GM12878 (cell line): ENCODE measurements at regions of chr15 and their contacts with region 1.

Region 1: DNA sequence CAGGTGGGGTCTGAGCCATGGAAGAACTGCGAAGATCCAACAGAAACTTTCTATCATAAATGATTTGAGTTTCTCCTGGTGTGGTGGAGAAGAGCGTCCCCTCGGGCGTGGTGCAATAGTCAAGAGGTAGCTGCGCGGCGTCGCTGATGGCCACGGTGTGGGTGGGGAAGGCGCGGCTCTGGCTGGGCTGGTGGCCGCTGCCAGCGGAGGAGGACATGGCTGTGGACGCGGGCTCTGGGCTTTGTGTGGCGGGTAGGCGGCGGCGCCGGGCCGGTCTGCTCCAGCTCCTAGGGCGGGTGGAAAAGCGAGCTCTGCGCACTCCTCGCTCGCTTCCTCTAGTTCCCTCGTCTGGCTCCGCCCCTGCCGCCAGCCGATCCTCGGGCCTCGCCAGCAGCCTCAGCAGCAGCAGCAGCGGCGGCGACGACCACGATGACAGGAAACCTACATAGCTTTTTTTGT is 5.9 kb downstream of the STARD9 start:
- DNase-seq: no peak
- ATAC-seq: peak; percentile 96
- H3K4me3 ChIP-seq: peak overlapping the region; percentile 57
- H3K27ac ChIP-seq: no peak overlapping the region; the same call in 1 of the 2 replicates
- H3K4me1 ChIP-seq: peaks cover 15% of the 10 kb centered on the region
- H3K27me3 ChIP-seq: no peaks in the 10 kb centered on the region
- CTCF ChIP-seq: 0 out of 6 replicates have a peak, but pooled peaks of 1 of the 3 experiments have one; percentile 2
- EP300 ChIP-seq: no peak
- POLR2A ChIP-seq: peak; percentile 78
- RAD21 ChIP-seq: no peak

Region 2: DNA sequence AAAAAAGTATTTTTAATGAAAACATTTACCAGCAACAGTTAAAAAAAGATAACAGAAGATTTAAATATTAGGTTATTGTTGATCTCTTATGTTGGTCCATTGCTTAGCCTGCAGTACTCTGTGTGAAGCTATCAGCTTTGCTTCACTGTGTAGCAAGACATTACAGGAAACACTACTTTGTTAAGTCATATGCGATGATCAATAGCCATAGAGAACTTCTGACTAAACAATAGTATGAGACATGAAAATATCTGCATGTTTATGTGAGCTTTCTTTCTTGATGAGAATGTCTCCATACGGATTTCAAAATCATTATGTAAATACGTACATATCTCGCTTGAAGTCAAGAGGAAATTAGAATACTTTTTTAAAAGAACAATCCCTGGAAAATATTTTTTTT is 249.0 kb before region 1 on chr15:
- CTCF ChIA-PET with region 1: no interaction called
- POLR2A ChIA-PET with region 1: no interaction called
- RAD21 ChIA-PET with region 1: no interaction called
- SMC1A ChIA-PET with region 1: no interaction called
- in situ Hi-C with region 1: no loop called
- intact Hi-C with region 1: no loop called
- DNase-seq: no peak
- ATAC-seq: no peak
- H3K4me3 ChIP-seq: no peak overlapping the region
- H3K27ac ChIP-seq: no peak overlapping the region
- H3K4me1 ChIP-seq: no peaks in the 10 kb centered on the region
- H3K27me3 ChIP-seq: no peaks in the 10 kb centered on the region
- CTCF ChIP-seq: no peak
- EP300 ChIP-seq: no peak
- POLR2A ChIP-seq: no peak
- RAD21 ChIP-seq: no peak

Region 3: GRCh38 chr15:42602501-42602900 is 21.2 kb after region 1 on chr15:
- CTCF ChIA-PET with region 1: interaction called, 4 read pairs
- POLR2A ChIA-PET with region 1: interaction called, 38 read pairs
- RAD21 ChIA-PET with region 1: interaction called, 30 read pairs
- SMC1A ChIA-PET with region 1: interaction called, 53 read pairs
- in situ Hi-C with region 1: no loop called
- intact Hi-C with region 1: no loop called
- DNase-seq: no peak
- ATAC-seq: no peak
- H3K4me3 ChIP-seq: no peak overlapping the region
- H3K27ac ChIP-seq: no peak overlapping the region
- H3K4me1 ChIP-seq: peaks cover 36% of the 10 kb centered on the region
- H3K27me3 ChIP-seq: no peaks in the 10 kb centered on the region
- CTCF ChIP-seq: no peak
- EP300 ChIP-seq: no peak
- POLR2A ChIP-seq: no peak
- RAD21 ChIP-seq: no peak

Region 4: GRCh38 chr15:42632105-42632675 is 50.9 kb after region 1 on chr15:
- CTCF ChIA-PET with region 1: no interaction called
- POLR2A ChIA-PET with region 1: interaction called, 4 read pairs
- RAD21 ChIA-PET with region 1: interaction called, 3 read pairs
- SMC1A ChIA-PET with region 1: interaction called, 4 read pairs
- in situ Hi-C with region 1: no loop called
- intact Hi-C with region 1: loop called (anchors 5 kb)
- DNase-seq: no peak
- ATAC-seq: peak; percentile 47
- H3K4me3 ChIP-seq: peak overlapping the region; percentile 14; the same call in 1 of the 2 replicates
- H3K27ac ChIP-seq: peak overlapping the region; percentile 31; the same call in 1 of the 2 replicates
- H3K4me1 ChIP-seq: peaks cover 7% of the 10 kb centered on the region
- H3K27me3 ChIP-seq: no peaks in the 10 kb centered on the region
- CTCF ChIP-seq: no peak
- EP300 ChIP-seq: no peak
- POLR2A ChIP-seq: no peak
- RAD21 ChIP-seq: no peak